ENCODE measurements at regions of chr4 and their contacts with region 1.

Region 1: DNA sequence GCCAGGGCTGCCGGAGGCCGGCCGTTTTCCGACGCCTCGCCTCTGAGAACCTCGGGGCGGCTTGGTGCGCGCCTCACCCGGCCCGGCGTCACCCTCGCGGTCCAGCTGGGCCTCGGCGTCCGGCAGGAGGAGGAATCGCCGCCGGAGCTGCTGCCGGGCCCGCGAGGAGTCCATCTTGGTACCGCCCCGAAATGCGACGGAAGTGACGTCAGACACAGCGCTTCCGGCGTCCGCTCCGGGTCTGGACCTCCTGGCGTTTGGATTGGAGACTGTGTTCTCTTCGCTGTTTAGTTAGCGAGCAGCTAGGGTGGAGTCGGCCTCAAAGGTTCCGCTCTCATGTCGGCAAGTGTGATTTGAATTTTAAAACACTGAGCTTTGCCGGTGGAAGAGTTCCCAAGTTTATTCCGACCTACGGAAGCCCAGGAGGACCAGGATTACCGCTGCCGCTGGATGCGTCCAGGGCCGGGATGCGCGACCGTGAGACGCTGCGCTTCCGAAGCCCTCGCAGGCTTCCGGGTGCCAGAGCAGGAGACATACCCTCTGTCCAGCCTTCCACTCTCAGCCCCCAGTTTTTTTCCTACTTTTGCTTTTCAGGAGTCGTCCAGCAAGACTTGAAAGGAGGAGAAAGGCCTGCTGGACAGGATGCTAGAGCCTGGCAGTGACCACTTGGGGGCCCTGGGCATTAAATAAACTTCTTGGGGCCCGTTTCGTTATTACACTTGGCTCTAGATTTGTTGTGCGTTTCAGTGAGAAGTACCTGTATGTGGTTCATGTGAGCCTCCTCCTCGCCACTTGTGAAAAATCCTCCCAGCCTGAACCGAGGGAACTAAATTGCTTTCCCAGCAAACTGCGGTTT is at the start of gene TMEM128:
- H3K4me3 ChIP-seq: peak within 1 kb of the TSS; percentile 79
- H3K27ac ChIP-seq: peak within 1 kb of the TSS; percentile 71
- H3K4me1 ChIP-seq: no peaks in the 10 kb centered on the region
- CTCF ChIP-seq: peak; percentile 16; the same call in 1 of the 2 replicates

Region 2: DNA sequence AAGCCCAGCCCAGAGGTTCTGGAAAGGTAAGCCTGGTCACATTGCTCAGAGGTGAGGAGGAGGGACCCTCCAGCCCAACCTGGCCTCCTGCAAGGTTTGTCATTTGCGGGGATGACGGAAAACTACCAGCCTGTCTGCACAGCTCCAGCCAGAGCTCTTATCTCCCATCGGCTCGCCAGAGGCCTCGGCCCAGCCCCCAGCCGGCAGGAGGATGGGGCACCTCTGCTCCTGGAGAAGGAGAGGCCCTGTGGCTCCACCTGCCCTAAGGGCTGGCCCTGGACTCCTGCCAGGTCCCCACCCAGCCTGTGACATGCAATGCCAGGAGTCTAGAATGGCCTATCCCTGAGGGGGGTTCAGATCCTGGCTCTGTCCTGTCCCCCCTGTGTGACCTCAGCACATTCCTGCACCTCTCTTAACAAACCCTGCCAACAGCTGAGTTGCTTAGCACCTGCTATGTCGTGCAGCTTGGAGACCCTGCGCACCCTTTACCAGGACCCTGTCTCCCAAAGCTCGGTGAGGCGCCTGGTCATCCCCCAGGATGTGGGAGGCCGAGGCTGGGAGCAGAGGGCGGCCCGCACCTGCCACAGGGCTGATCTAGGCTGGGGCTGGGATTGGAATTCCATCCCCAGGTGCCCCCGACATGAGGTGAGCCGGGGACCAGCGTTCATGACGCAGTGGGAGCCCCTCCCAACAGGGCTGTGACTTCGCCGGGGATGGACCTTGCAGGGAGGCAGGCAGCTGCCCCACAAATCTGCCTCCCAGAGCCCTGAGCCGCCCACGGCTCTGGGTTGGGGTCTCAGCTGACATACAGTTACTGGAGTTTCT is 467.7 kb before region 1 on chr4:
- CTCF ChIA-PET with region 1: no interaction called
- POLR2A ChIA-PET with region 1: no interaction called
- H3K4me3 ChIP-seq: no peak overlapping the region
- H3K27ac ChIP-seq: no peak overlapping the region
- H3K4me1 ChIP-seq: no peaks in the 10 kb centered on the region
- CTCF ChIP-seq: no peak

Region 3: DNA sequence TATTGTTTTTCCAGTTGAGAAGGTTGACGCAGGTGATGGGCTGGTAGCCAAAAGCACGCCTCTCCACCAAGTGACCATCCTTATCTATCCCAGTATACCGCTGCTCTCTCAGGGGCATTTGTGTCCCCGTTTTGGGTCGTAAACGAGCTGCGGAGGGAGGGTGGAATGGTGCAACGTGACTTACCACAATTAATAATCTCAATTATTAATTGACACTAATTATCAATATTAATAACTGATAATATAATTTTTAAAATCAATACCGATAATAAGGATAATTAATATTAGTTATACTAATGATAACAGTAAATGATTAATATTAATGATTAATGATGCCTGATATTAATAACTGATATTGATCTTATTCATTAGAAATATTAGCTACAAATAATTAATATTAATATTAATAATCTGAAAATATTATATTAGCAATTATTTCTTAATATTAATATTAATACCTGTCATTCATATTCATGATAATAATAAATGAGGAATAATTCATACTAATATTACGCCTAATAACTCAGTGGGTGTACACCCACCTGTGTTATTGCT is 77.6 kb before region 1 on chr4:
- CTCF ChIA-PET with region 1: no interaction called
- POLR2A ChIA-PET with region 1: no interaction called
- H3K4me3 ChIP-seq: no peak overlapping the region
- H3K27ac ChIP-seq: no peak overlapping the region
- H3K4me1 ChIP-seq: no peaks in the 10 kb centered on the region
- CTCF ChIP-seq: no peak

Region 4: DNA sequence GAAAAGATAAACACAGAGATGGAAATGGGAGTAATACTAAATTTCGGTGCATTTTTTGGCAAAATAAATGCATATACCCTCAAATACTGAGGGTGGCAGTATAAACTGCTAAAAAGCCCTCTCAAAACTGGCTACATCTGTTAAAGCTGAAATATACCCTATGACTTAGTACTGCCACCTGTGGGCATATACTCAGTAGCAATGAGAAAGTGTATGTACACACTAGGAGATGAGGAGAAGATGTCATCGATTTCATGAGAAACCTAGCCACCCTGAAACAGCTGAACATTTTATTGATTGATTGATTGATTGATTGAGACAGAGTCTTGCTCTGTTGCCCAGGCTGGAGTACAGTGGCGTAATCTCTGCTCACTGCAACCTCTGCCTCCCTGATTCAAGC is 12.0 kb after region 1 on chr4:
- CTCF ChIA-PET with region 1: interaction called, 15 read pairs
- POLR2A ChIA-PET with region 1: no interaction called
- H3K4me3 ChIP-seq: no peak overlapping the region
- H3K27ac ChIP-seq: no peak overlapping the region
- H3K4me1 ChIP-seq: no peaks in the 10 kb centered on the region
- CTCF ChIP-seq: peak; percentile 69

Region 5: GRCh38 chr4:4334798-4335520 is 86.7 kb after region 1 on chr4:
- CTCF ChIA-PET with region 1: interaction called, 10 read pairs
- POLR2A ChIA-PET with region 1: no interaction called
- H3K4me3 ChIP-seq: no peak overlapping the region
- H3K27ac ChIP-seq: no peak overlapping the region
- H3K4me1 ChIP-seq: no peaks in the 10 kb centered on the region
- CTCF ChIP-seq: peak; percentile 63

Measured in HEK293 (cell line).